ENCODE measurements at regions of chr12 and their contacts with region 1.

Region 1: DNA sequence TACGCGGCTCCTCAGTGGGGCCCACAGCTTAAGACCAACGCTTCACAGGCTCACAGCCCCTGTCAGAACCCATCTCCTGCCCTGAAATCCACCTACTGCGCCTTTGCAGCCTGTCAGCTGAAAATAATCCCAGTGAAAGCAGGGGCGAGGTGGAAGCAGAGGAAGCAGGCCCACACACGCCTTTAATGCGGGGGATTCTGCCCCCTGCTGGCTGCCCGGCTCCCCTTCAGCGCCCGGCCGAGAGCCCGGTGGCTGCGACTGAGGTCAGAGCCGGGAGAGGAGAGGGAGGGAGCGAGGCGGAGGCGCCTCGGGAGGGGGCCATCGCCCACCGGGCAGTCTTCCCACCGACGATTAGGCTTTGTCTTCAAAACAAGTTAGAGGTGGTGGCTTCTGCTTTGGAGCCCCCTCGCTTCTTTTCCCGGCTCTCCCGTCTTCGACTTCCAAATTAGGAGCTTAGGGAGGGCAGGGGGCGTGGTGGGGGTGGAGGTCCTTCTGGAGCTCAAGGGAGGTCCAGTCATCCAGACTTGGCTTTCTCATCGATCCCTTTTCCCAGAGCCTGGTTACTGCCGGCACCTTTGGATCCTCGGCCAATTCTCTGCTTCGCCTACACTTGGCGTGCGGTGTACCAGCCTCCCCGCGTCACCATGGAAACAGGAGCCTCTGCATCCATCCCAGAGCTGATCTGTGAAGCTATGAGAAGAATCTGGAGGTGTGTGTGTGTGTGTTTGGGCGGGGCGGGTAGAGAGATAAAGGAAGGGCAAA is 25.2 kb upstream of the RND1 start:
- DNase-seq: no peak
- H3K4me3 ChIP-seq: peak overlapping the region; percentile 49
- CTCF ChIP-seq: peak; percentile 99

Region 2: GRCh38 chr12:48814262-48815125 is 76.3 kb before region 1 on chr12:
- CTCF ChIA-PET with region 1: interaction called, 17 read pairs
- POLR2A ChIA-PET with region 1: no interaction called
- DNase-seq: no peak
- H3K4me3 ChIP-seq: peak overlapping the region; percentile 83
- CTCF ChIP-seq: peak; percentile 99

Region 3: GRCh38 chr12:48865434-48866290 is 25.2 kb before region 1 on chr12 and contains the start of gene RND1:
- CTCF ChIA-PET with region 1: interaction called, 852 read pairs
- POLR2A ChIA-PET with region 1: interaction called, 3 read pairs
- DNase-seq: peak; percentile 36
- H3K4me3 ChIP-seq: peak within 1 kb of the TSS; percentile 77
- CTCF ChIP-seq: no peak

Region 4: DNA sequence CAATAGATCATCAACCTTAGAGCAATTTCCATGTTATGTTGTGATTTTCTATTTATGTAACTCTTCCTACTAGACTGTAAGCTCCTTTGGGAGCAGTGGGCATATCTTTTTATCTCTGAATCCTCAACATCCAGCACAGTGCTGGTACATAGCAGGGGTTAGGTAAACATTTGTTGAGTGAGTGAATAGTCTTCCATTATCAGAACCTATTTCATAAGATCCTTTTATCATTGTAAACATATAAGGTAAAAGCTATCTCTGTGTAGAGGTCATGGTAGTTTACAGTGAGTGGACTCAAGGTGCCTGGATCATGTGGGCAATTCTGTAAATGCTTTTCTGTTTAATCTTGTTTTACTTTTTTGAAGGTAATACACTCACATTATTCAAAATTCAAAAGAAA is 19.4 kb after region 1 on chr12:
- CTCF ChIA-PET with region 1: interaction called, 144 read pairs
- POLR2A ChIA-PET with region 1: no interaction called
- DNase-seq: no peak
- H3K4me3 ChIP-seq: no peak overlapping the region
- CTCF ChIP-seq: no peak

Region 5: GRCh38 chr12:48936379-48936979 is 45.6 kb after region 1 on chr12:
- CTCF ChIA-PET with region 1: interaction called, 30 read pairs
- POLR2A ChIA-PET with region 1: no interaction called
- DNase-seq: no peak
- H3K4me3 ChIP-seq: no peak overlapping the region
- CTCF ChIP-seq: peak; percentile 78

Region 6: GRCh38 chr12:48957141-48958048 is 66.6 kb after region 1 on chr12 and contains the start of gene ARF3:
- CTCF ChIA-PET with region 1: interaction called, 10 read pairs
- POLR2A ChIA-PET with region 1: no interaction called
- DNase-seq: no peak
- H3K4me3 ChIP-seq: peak within 1 kb of the TSS; percentile 99
- CTCF ChIP-seq: no peak

Region 7: DNA sequence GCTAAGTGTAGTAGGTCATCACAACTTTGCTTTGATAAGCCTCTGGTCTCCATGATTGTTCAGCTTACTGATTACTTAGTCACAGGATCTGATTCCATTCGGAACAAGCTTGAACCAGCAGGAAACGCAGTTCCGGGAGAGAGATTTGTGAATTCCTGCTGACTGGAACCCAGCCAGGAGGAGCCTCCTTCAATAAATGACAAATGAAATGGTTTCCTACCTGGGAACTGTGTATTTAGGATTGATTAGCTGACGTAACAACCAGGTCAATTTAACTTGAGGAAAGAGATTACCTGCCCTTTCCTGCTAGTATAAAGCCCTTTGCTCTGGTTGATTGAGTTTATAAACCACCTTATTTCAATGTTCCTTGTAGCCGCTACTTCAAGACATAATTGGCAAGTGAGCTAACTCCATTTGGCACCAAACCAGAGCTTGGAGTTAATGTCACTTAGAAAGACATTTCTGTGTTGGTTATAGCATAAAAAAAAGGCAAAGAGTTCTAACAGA is 612.9 kb after region 1 on chr12:
- CTCF ChIA-PET with region 1: no interaction called
- POLR2A ChIA-PET with region 1: no interaction called
- DNase-seq: no peak
- H3K4me3 ChIP-seq: no peak overlapping the region
- CTCF ChIP-seq: no peak

Measured in AG04449 (cell line).